ENCODE measurements at regions of chr3 and their contacts with region 1.

Region 1: GRCh38 chr3:101573449-101574387 is at the start of gene PCNP:
- DNase-seq: peak; percentile 98 to 100 (median 99)
- ATAC-seq: peak; percentile 82
- H3K4me3 ChIP-seq: peak within 1 kb of the TSS; percentile 83 to 96
- H3K4me3 Mint-ChIP-seq: peak within 1 kb of the TSS; percentile 95
- H3K27ac ChIP-seq: peak within 1 kb of the TSS; percentile 98 to 99
- H3K27ac Mint-ChIP-seq: peak within 1 kb of the TSS; percentile 99
- H3K4me1 ChIP-seq: peaks cover 56% of the 10 kb centered on the region
- H3K4me1 Mint-ChIP-seq: peaks cover 73% of the 10 kb centered on the region
- H3K27me3 ChIP-seq: no peaks in the 10 kb centered on the region
- H3K27me3 Mint-ChIP-seq: no peaks in the 10 kb centered on the region
- CTCF ChIP-seq: peak; percentile 85
- total RNA-seq, gene PCNP: 175 to 189 TPM

Region 2: DNA sequence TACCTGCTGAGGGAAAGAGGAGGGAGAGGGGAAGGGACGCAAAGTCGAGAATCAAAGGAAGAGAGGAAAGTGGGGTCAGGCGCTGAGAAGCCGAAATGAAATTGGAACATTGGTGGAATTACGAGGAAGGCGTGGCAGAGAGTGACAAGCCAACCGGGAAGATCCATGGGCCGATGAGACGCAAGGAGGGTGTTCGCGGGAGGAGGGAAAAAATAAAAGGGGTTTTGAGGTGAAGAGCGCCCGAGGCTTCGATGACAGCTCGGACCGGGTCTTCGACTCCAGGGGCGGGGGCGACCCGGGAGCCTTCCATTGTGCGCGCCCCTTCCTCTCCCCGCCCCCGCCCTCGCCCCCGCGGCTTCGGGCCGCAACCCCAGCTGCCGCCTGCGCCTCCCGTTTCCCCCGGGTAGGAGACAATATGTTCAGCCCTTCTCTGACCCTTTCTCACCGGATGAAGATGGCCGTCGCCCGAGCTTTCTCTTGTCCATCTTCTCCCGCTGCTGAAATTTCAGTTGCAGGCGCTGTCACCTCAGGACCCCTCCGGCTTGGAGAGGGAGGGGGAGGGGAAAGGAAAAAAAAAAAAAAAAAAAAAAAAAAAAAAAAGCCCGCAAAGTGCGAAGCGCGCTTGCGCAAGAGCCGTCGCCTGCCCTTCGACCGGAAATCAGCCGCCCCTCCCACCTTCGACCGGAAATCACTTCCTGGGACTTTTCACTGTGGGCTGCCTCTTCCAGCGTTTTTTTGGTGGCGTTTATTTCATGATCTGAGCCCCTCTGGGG is 60.9 kb before region 1 on chr3 and contains the start of gene SENP7:
- CTCF ChIA-PET with region 1: interaction called, 3 read pairs
- POLR2A ChIA-PET with region 1: interaction called, 19 read pairs
- intact Hi-C with region 1: loop called in 1 of 2 experiments (anchors 1 kb)
- DNase-seq: peak; percentile 38 to 91 (median 82)
- ATAC-seq: peak; percentile 63
- H3K4me3 ChIP-seq: peak within 1 kb of the TSS; percentile 67 to 80
- H3K4me3 Mint-ChIP-seq: peak within 1 kb of the TSS; percentile 100
- H3K27ac ChIP-seq: peak within 1 kb of the TSS; percentile 75 to 90
- H3K27ac Mint-ChIP-seq: peak within 1 kb of the TSS; percentile 99
- H3K4me1 ChIP-seq: peaks cover 29% of the 10 kb centered on the region
- H3K4me1 Mint-ChIP-seq: peaks cover 59% of the 10 kb centered on the region
- H3K27me3 ChIP-seq: no peaks in the 10 kb centered on the region
- H3K27me3 Mint-ChIP-seq: no peaks in the 10 kb centered on the region
- CTCF ChIP-seq: no peak
- total RNA-seq, gene SENP7: 28.3 to 29.1 TPM

Region 3: GRCh38 chr3:101561630-101562328 is 11.9 kb before region 1 on chr3 and contains the start of gene TRMT10C:
- CTCF ChIA-PET with region 1: interaction called, 10 read pairs
- POLR2A ChIA-PET with region 1: interaction called, 21 read pairs
- intact Hi-C with region 1: loop called (anchors 1 kb)
- DNase-seq: peak; percentile 86 to 96 (median 92)
- ATAC-seq: peak; percentile 95
- H3K4me3 ChIP-seq: peak within 1 kb of the TSS; percentile 83 to 96
- H3K4me3 Mint-ChIP-seq: peak within 1 kb of the TSS; percentile 99
- H3K27ac ChIP-seq: peak within 1 kb of the TSS; percentile 86 to 93
- H3K27ac Mint-ChIP-seq: peak within 1 kb of the TSS; percentile 99
- H3K4me1 ChIP-seq: peaks cover 12% of the 10 kb centered on the region
- H3K4me1 Mint-ChIP-seq: peaks cover 27% of the 10 kb centered on the region
- H3K27me3 ChIP-seq: no peaks in the 10 kb centered on the region
- H3K27me3 Mint-ChIP-seq: peaks cover 1% of the 10 kb centered on the region
- CTCF ChIP-seq: no peak
- total RNA-seq, gene TRMT10C: 41.5 to 44.0 TPM

Region 4: DNA sequence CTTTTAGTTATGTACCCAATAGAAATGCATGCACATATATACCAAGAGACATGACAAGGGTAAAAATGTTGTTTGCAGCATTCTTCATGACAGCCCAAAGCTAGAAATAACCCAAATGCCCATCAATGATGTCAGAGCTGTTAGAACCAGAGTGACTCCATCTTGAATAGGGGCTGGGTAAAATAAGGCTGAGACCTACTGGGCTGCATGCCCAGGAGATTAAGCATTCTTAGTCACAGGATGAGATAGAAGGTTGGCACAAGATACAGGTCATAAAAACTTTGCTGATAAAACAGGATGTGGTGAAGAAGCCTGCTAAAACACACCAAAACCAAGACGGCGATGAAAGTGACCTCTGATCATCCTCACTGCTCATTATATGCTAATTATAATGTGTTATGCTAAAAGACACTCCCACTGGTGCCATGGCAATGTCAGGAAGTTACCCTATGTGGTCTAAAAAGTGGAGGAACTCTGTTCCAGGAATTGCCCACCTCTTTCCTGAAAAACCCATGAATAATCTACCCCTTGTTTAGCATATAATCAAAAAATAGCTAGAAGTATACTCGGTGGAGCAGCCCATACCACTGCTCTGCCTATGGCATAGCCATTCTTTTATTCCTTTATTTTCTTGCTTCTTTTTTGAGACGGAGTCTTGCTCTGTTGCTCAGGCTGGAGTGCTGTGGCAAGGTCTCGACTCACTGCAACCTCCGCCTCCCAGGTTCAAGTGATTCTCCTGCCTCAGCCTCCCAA is 70.3 kb after region 1 on chr3:
- CTCF ChIA-PET with region 1: no interaction called
- POLR2A ChIA-PET with region 1: interaction called, 3 read pairs
- intact Hi-C with region 1: loop called in 1 of 2 experiments (anchors 5 kb)
- DNase-seq: peak in 7 of 9 experiments; percentile 19 to 81 (median 56)
- ATAC-seq: peak; percentile 80
- H3K4me3 ChIP-seq: no peak overlapping the region
- H3K4me3 Mint-ChIP-seq: peak overlapping the region; percentile 24
- H3K27ac ChIP-seq: peak overlapping the region; percentile 2 to 63
- H3K27ac Mint-ChIP-seq: peak overlapping the region; percentile 84
- H3K4me1 ChIP-seq: peaks cover 23% of the 10 kb centered on the region
- H3K4me1 Mint-ChIP-seq: peaks cover 26% of the 10 kb centered on the region
- H3K27me3 ChIP-seq: no peaks in the 10 kb centered on the region
- H3K27me3 Mint-ChIP-seq: no peaks in the 10 kb centered on the region
- CTCF ChIP-seq: no peak

Region 5: DNA sequence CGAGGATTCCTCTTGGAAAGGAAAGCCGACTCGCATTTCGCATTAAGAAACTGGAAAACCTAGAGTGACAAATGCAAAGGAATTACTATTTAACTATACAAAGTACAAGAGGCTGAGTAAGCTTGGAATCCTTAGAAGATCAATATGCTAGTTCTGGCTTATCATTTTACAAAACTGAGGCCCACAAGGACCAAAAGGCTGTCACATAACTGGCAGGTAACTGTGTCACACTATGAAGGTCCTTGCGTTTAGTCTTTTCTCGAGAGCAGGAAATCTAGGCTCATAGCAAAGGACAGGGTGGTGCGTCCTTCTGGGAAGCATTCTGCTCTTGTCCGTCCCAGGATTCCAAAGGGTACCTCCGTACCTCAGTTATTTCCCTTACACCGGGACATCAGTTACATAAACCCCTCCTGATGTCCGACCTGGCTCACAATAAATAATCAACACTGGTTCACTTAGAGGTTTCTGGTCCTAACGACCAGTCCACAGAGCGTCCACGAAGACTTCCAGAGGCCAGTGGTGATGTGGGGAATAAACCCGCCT is 112.2 kb after region 1 on chr3:
- CTCF ChIA-PET with region 1: interaction called, 3 read pairs
- POLR2A ChIA-PET with region 1: interaction called, 14 read pairs
- intact Hi-C with region 1: loop called in 1 of 2 experiments (anchors 1 kb)
- DNase-seq: no peak
- ATAC-seq: peak; percentile 3
- H3K4me3 ChIP-seq: peak overlapping the region; percentile 89 to 93
- H3K4me3 Mint-ChIP-seq: peak overlapping the region; percentile 100
- H3K27ac ChIP-seq: peak overlapping the region; percentile 94 to 96
- H3K27ac Mint-ChIP-seq: peak overlapping the region; percentile 99
- H3K4me1 ChIP-seq: peaks cover 39% of the 10 kb centered on the region
- H3K4me1 Mint-ChIP-seq: peaks cover 36% of the 10 kb centered on the region
- H3K27me3 ChIP-seq: no peaks in the 10 kb centered on the region
- H3K27me3 Mint-ChIP-seq: no peaks in the 10 kb centered on the region
- CTCF ChIP-seq: no peak

Region 6: GRCh38 chr3:101779047-101779821 is 205.5 kb after region 1 on chr3 and contains the start of gene NXPE3:
- CTCF ChIA-PET with region 1: no interaction called
- POLR2A ChIA-PET with region 1: interaction called, 3 read pairs
- intact Hi-C with region 1: loop called in 1 of 2 experiments (anchors 2 kb)
- DNase-seq: peak; percentile 86 to 96 (median 94)
- ATAC-seq: peak; percentile 88
- H3K4me3 ChIP-seq: peak within 1 kb of the TSS; percentile 48 to 92
- H3K4me3 Mint-ChIP-seq: peak within 1 kb of the TSS; percentile 89
- H3K27ac ChIP-seq: peak within 1 kb of the TSS; percentile 77 to 88
- H3K27ac Mint-ChIP-seq: peak within 1 kb of the TSS; percentile 99
- H3K4me1 ChIP-seq: peaks cover 42% of the 10 kb centered on the region
- H3K4me1 Mint-ChIP-seq: peaks cover 57% of the 10 kb centered on the region
- H3K27me3 ChIP-seq: no peaks in the 10 kb centered on the region
- H3K27me3 Mint-ChIP-seq: no peaks in the 10 kb centered on the region
- CTCF ChIP-seq: no peak
- total RNA-seq, gene NXPE3: 39.8 to 40.3 TPM

Measured in CD8-positive, alpha-beta T cell (primary cell).